BJ (cell line): ENCODE measurements at regions of chr11 and their contacts with region 1.

Region 1: DNA sequence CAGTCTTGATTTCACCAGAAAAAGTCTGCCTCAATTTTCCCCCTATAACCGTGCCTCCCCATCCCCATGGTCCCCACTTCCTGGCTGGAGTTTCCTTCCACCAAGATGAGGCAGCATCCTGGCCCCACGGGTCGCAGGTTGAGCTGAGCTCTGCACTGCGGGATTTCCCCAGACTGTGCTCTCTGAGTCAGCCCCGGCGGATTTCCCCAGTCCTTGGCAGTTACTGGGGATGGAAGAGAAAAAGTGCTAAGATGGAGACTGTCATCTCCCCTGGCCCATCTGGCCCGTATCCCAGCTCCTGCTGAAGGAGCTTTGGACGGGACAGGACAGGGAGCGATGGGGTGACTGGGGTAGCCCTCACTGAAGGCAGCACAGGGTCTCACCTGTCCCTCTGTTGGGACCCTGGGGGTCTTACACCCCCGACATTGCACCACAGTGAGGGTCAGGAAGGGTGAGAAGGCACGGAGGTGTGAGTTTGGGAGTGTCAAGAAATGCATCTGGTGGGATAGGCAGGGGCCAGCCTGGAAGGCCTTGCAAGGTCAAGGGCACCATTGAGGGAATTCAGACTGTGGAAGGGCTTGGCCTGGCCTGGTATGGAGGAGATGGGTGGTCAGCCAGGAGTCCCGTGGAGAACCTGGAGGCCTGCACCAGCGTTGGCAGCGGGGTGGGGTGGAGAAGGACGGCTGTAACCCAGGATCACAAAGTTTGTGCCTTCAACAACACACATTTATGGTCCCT is 36.5 kb downstream of the NADSYN1 start:
- DNase-seq: no peak
- H3K4me3 ChIP-seq: no peak overlapping the region
- H3K27me3 ChIP-seq: no peaks in the 10 kb centered on the region
- CTCF ChIP-seq: no peak

Region 2: DNA sequence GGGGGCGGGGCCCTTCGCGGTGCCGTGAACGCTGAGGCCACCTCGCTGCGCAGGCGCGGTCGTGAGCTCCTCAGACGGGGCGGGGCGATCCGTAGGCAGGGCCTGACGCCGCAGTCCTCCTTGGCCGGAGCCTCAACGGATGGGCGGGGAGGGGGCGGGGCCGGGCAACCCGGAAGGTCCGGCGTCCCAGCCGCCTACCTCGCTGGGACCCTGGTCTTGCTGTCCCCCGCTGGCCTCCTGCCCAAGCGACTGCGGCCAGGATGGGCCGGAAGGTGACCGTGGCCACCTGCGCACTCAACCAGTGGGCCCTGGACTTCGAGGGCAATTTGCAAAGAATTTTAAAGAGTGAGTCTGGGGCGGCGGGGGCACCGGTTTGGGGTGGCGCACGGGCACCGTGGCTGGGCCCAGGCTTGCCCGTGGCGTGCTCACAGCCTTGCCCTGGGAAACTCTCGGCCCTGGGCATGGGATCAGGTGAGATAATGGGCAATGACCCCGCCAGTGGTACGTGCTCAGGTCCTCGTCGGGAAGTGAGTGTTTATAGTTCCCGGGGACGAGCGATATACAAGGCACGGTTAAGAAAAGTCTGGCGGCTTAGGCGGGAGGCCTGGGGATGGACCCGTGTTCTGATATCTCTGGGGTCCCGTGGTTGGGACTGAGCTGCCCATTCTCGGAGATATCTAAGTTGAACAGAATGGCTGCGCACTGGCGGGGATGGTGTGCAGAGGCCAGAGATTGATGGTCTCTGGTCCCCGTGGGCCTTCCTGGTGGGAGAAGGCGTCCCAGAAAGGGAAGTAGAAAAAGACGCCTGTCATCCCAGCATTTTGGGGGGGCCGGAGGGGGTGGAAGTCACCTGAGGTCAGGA is 36.2 kb before region 1 on chr11 and contains the start of gene NADSYN1:
- CTCF ChIA-PET with region 1: interaction called, 3 read pairs
- POLR2A ChIA-PET with region 1: interaction called, 11 read pairs
- DNase-seq: peak; percentile 57
- H3K4me3 ChIP-seq: peak within 1 kb of the TSS; percentile 94
- H3K27me3 ChIP-seq: no peaks in the 10 kb centered on the region
- CTCF ChIP-seq: no peak
- polyA plus RNA-seq, gene NADSYN1: 44.3 and 63.6 TPM in 2 replicates